HCT116 (cell line): ENCODE measurements at regions of chr6 and their contacts with region 1.

Region 1: DNA sequence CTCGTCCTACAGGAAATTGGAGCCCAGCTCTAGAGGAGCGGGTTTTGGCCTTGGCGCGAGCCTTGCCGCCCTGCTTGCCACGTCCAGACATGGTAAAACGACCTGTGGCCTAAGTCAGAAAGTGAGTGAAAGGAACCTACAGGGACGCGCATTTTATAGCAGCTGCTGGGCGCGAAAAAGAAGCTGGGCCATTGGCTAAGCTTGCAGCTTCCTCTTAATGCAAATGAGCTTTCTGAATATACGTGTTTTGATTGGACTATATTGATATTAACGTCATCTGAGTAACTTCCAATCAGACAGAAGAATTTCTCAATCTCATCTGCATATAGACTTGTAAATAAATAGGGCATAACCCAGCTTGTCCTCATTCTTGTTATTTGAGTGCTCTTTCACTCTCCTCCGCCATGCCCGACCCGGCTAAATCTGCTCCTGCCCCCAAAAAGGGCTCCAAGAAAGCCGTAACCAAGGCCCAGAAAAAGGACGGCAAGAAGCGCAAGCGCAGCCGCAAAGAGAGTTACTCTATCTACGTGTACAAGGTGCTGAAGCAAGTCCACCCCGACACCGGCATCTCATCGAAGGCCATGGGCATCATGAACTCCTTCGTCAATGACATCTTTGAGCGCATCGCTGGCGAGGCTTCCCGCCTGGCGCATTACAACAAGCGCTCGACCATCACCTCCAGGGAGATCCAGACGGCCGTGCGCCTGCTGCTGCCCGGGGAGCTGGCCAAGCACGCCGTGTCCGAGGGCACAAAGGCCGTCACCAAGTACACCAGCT is 18.9 kb downstream of the OR2B2 start:
- DNase-seq: peak; percentile 99
- ATAC-seq: peak; percentile 52
- H3K4me3 ChIP-seq: peak overlapping the region; percentile 74 to 76
- H3K27ac ChIP-seq: peak overlapping the region; percentile 98
- H3K4me1 ChIP-seq: peaks cover 20 to 60% of the 10 kb centered on the region in 2 experiments
- H3K27me3 ChIP-seq: no peaks in the 10 kb centered on the region
- CTCF ChIP-seq: no peak
- POLR2A ChIP-seq: peak; percentile 83
- RAD21 ChIP-seq: no peak

Region 2: GRCh38 chr6:27132532-27133280 is 760.5 kb before region 1 on chr6:
- CTCF ChIA-PET with region 1: no interaction called
- POLR2A ChIA-PET with region 1: interaction called, 44 read pairs
- RAD21 ChIA-PET with region 1: no interaction called
- intact Hi-C with region 1: loop called (anchors 5 kb)
- DNase-seq: peak; percentile 100
- ATAC-seq: peak; percentile 75
- H3K4me3 ChIP-seq: peak overlapping the region; percentile 62 to 71
- H3K27ac ChIP-seq: peak overlapping the region; percentile 99
- H3K4me1 ChIP-seq: peaks cover 21 to 38% of the 10 kb centered on the region in 2 experiments
- H3K27me3 ChIP-seq: no peaks in the 10 kb centered on the region
- CTCF ChIP-seq: no peak
- POLR2A ChIP-seq: peak; percentile 98
- RAD21 ChIP-seq: no peak

Region 3: DNA sequence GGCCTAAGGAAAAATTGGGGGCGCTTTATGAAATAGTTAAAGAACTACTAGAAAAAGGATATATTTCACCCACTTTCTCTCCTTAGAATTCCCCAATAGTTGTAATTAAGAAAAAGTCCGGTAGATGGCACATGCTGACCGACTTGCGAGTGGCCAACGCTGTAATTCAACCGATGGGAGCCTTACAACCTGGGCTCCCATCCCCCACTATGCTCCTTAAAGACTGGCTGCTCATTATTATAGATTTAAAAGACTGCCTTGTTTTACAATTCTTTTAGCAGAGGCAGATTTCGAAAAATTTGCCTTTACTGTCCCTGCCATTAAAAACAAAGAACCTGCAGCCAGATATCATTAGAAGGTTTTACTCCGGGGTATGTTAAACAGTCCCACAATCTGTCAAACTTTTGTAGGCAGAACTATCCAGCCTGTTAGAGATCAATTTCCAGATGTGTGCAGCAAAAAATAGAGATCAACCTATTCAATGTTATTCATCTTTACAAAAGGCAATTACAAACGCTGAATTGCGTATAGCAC is 704.3 kb before region 1 on chr6:
- CTCF ChIA-PET with region 1: no interaction called
- POLR2A ChIA-PET with region 1: no interaction called
- RAD21 ChIA-PET with region 1: no interaction called
- intact Hi-C with region 1: loop called (anchors 2 kb)
- DNase-seq: peak; percentile 64
- ATAC-seq: peak; percentile 91
- H3K4me3 ChIP-seq: peak overlapping the region; percentile 61 to 62
- H3K27ac ChIP-seq: peak overlapping the region; percentile 61
- H3K4me1 ChIP-seq: peaks cover 2 to 13% of the 10 kb centered on the region in 2 experiments; a peak in 3 of 4 replicates
- H3K27me3 ChIP-seq: no peaks in the 10 kb centered on the region
- CTCF ChIP-seq: peak; percentile 50 to 85 (median 70); a peak in 5 of 6 replicates
- POLR2A ChIP-seq: no peak
- RAD21 ChIP-seq: peak; percentile 95

Region 4: GRCh38 chr6:27642744-27643456 is 250.3 kb before region 1 on chr6:
- CTCF ChIA-PET with region 1: no interaction called
- POLR2A ChIA-PET with region 1: no interaction called
- RAD21 ChIA-PET with region 1: no interaction called
- intact Hi-C with region 1: no loop called
- DNase-seq: no peak
- ATAC-seq: no peak
- H3K4me3 ChIP-seq: no peak overlapping the region
- H3K27ac ChIP-seq: no peak overlapping the region
- H3K4me1 ChIP-seq: peaks cover 0 to 6% of the 10 kb centered on the region in 2 experiments; a peak in 2 of 4 replicates
- H3K27me3 ChIP-seq: no peaks in the 10 kb centered on the region
- CTCF ChIP-seq: no peak
- POLR2A ChIP-seq: no peak
- RAD21 ChIP-seq: no peak

Region 5: GRCh38 chr6:27772261-27773001 is 120.8 kb before region 1 on chr6:
- CTCF ChIA-PET with region 1: interaction called, 16 read pairs
- POLR2A ChIA-PET with region 1: interaction called, 4 read pairs
- RAD21 ChIA-PET with region 1: interaction called in 1 of 2 experiments, 4 read pairs
- intact Hi-C with region 1: loop called (anchors 1 kb)
- DNase-seq: peak; percentile 78
- ATAC-seq: peak; percentile 92
- H3K4me3 ChIP-seq: peak overlapping the region; percentile 3 to 38; a peak in 3 of 4 replicates
- H3K27ac ChIP-seq: peak overlapping the region; percentile 4; the same call in 1 of the 2 replicates
- H3K4me1 ChIP-seq: peaks cover 4 to 16% of the 10 kb centered on the region in 2 experiments; a peak in 3 of 4 replicates
- H3K27me3 ChIP-seq: no peaks in the 10 kb centered on the region
- CTCF ChIP-seq: peak; percentile 85 to 93 (median 91)
- POLR2A ChIP-seq: no peak
- RAD21 ChIP-seq: peak; percentile 72

Region 6: DNA sequence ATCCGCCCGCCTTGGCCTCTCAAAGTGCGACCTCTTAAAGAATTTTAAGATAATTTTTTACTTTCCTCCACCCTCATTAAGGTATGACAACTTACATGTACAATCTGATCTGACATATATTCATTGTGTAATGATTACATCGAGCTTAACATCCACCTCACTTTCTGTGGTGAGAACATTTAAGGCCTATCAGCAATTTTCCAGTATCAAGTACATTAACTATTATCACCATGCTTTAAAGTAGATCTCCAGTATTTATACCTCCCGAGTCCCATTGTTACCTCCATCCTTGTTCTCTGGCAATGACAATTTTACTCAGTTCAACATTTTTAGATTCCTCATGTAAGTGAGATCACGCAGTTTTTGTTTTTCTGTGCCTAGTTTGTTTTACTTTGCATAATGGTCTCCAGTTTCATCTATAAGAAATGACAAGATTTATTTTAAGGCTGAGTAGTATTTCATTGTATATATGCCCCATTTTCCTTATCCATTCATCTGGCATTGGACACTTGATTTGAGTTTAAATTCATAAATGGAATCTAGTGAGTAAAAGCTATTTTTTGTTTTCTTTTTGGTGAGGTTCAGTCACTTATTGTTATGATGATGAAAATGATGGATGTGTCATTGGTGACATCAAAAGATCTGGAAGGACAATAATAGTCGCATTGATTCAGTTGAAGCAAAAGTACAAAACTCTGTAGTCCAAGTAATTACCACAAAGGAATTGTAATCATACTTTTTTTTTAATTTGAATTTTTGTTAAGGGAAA is 68.0 kb before region 1 on chr6:
- CTCF ChIA-PET with region 1: interaction called, 5 read pairs
- POLR2A ChIA-PET with region 1: interaction called, 422 read pairs
- RAD21 ChIA-PET with region 1: interaction called, 3 to 4 read pairs
- intact Hi-C with region 1: no loop called
- DNase-seq: no peak
- ATAC-seq: no peak
- H3K4me3 ChIP-seq: peak overlapping the region; percentile 50 to 71
- H3K27ac ChIP-seq: peak overlapping the region; percentile 76
- H3K4me1 ChIP-seq: peaks cover 5 to 39% of the 10 kb centered on the region in 2 experiments; a peak in 3 of 4 replicates
- H3K27me3 ChIP-seq: no peaks in the 10 kb centered on the region
- CTCF ChIP-seq: no peak
- POLR2A ChIP-seq: no peak
- RAD21 ChIP-seq: no peak

Region 7: DNA sequence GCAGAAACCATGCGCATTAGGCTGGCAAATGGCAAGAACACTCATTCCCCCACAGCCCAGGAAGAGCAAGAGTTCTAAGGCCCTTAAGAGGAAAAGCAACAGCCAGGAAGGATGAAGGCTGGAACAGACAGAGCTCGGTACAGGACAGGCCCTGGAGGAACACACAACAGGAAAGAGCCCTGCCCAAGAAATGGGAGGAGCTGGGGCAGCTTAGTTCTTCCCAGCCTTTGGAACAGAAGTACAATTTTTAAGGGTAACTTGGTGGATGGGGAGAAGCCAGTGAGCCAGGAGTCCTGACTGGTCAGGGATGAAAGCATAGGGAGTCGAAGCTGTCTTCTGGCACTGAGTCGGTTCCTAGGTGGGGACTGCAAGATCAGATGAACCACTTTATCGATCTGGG is 13.4 kb before region 1 on chr6:
- CTCF ChIA-PET with region 1: no interaction called
- POLR2A ChIA-PET with region 1: interaction called, 10 read pairs
- RAD21 ChIA-PET with region 1: no interaction called
- intact Hi-C with region 1: no loop called
- DNase-seq: no peak
- ATAC-seq: 0 out of 2 replicates have a peak, but pooled peaks have one; percentile 25
- H3K4me3 ChIP-seq: no peak overlapping the region
- H3K27ac ChIP-seq: no peak overlapping the region
- H3K4me1 ChIP-seq: no peaks in the 10 kb centered on the region
- H3K27me3 ChIP-seq: no peaks in the 10 kb centered on the region
- CTCF ChIP-seq: no peak
- POLR2A ChIP-seq: no peak
- RAD21 ChIP-seq: no peak